AG04450 (cell line): ENCODE measurements at regions of chr12 and their contacts with region 1.

Region 1: GRCh38 chr12:124321040-124321481 is 26.2 kb downstream of the RFLNA start:
- DNase-seq: no peak
- H3K4me3 ChIP-seq: no peak overlapping the region
- H3K27ac ChIP-seq: no peak overlapping the region
- H3K27me3 ChIP-seq: peaks cover 15% of the 10 kb centered on the region
- CTCF ChIP-seq: peak; percentile 80

Region 2: DNA sequence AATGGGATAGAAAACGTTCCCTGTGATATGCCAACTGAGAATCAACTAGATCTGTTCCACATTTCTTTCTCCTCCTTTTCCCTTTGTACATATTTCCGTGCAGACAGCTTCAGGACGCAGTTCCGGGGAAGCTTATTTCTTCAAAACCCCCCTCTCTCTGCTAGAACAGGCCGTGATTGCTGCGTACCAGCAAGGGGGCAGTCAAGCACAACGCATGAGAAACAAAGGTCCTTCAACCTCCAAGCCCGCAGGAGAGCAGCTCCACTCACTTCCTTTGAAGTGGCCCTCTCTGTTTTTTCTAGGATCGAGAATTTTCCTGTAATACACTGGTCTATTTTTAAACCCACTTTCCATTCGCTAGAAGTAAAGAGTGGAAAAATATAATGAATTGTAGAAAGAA is 267.2 kb before region 1 on chr12:
- CTCF ChIA-PET with region 1: interaction called, 11 read pairs
- POLR2A ChIA-PET with region 1: no interaction called
- DNase-seq: peak; percentile 18
- H3K4me3 ChIP-seq: no peak overlapping the region
- H3K27ac ChIP-seq: no peak overlapping the region
- H3K27me3 ChIP-seq: no peaks in the 10 kb centered on the region
- CTCF ChIP-seq: peak; percentile 63

Region 3: DNA sequence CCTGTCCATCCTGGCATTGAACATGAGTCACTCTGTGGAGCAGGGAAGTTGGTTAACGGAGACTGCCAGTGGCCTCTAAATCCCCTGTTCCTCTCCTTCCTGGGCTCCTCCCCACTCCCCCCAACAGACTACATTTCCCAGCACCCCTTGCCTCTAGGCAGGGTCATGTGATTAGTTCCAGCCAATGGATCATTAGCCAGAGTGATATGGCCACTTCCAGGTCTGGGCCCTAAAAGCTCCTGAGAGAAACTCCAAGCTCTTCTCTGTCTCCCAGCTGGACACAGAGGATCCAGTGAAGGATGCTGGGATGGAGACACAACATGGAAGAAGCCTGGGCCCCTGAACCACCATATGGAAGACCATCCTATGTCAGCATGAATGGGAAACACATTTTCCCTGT is 80.6 kb before region 1 on chr12:
- CTCF ChIA-PET with region 1: no interaction called
- POLR2A ChIA-PET with region 1: no interaction called
- DNase-seq: no peak
- H3K4me3 ChIP-seq: no peak overlapping the region
- H3K27ac ChIP-seq: no peak overlapping the region
- H3K27me3 ChIP-seq: peaks cover 6% of the 10 kb centered on the region
- CTCF ChIP-seq: no peak

Region 4: DNA sequence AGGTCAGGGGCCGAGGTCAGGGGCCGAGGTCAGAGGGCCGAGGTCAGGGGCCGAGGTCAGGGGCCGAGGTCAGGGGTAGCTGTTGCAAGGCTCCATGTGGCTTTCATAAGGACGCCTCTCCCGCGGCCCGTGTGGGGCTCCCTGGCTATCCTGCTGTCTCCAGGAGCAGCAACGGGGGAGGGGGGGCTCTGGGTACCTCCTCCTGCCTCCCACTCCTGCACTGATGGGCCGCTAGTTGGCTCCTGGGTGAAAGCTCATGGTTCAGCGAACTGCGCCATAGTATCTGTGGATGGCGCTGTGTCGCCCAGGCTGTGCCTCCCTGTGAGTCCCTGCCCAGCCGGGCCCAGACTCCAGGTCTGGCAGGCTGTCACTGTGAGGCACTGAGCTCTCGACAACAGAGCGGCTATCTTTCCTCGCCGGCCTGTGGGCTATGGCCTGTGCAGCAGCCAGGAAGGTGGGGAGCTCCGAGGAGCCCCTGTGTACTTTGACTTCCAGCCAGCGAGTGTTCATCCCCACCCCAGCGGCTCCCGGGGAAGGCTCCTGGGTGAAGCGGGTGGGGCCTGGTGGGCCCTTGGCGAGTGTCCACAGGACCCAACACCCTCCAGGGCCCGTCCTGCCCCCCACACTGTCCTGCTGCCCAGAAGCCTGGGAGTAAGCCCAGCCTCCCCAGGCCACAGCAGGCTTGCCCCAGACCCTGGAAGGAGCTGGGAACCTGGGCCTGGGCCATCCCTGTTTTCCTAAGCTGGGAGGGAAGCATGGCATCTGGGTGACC is 18.1 kb before region 1 on chr12:
- CTCF ChIA-PET with region 1: no interaction called
- POLR2A ChIA-PET with region 1: no interaction called
- DNase-seq: no peak
- H3K4me3 ChIP-seq: no peak overlapping the region
- H3K27ac ChIP-seq: no peak overlapping the region
- H3K27me3 ChIP-seq: peaks cover 30% of the 10 kb centered on the region
- CTCF ChIP-seq: no peak